Endothelial cell of umbilical vein (primary cell): ENCODE measurements at regions of chr1 and their contacts with region 1.

Region 1: DNA sequence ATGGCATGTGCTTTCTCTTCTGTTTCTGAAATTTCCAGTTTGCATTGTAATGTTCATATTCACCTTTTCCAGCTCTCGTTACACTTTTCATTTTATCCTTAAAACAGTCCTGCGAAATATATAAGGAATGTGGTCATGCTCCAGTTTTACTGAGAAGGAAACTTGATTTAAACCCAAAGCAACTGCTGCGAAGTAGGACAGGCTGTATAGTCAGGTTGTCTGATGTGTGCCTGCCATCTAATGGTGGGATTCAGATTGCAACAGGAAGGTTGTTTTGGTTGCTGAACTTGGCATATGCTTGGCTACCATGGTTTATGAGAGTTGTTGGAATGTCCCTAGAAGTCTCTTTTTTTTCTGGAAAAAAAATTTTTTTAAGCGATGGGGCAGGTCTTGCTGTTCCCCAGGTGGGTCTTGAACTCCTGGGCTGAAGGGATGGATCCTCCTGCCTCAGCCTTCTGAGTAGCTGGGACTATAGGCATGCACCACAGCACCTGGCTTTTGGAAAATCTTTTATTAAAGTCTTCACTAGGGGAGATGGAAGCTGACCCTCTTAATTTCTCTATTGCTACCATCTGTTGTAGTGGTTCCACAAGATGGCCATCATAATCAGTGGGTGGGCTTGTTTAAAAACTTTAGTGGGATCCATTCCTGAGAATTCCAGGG is 86.9 kb downstream of the UCK2 start:
- DNase-seq: peak; percentile 86
- H3K4me3 ChIP-seq: no peak overlapping the region
- H3K27ac ChIP-seq: no peak overlapping the region
- H3K4me1 ChIP-seq: peaks cover 18% of the 10 kb centered on the region
- H3K27me3 ChIP-seq: no peaks in the 10 kb centered on the region
- CTCF ChIP-seq: peak; percentile 81 to 82
- POLR2A ChIP-seq: no peak

Region 2: DNA sequence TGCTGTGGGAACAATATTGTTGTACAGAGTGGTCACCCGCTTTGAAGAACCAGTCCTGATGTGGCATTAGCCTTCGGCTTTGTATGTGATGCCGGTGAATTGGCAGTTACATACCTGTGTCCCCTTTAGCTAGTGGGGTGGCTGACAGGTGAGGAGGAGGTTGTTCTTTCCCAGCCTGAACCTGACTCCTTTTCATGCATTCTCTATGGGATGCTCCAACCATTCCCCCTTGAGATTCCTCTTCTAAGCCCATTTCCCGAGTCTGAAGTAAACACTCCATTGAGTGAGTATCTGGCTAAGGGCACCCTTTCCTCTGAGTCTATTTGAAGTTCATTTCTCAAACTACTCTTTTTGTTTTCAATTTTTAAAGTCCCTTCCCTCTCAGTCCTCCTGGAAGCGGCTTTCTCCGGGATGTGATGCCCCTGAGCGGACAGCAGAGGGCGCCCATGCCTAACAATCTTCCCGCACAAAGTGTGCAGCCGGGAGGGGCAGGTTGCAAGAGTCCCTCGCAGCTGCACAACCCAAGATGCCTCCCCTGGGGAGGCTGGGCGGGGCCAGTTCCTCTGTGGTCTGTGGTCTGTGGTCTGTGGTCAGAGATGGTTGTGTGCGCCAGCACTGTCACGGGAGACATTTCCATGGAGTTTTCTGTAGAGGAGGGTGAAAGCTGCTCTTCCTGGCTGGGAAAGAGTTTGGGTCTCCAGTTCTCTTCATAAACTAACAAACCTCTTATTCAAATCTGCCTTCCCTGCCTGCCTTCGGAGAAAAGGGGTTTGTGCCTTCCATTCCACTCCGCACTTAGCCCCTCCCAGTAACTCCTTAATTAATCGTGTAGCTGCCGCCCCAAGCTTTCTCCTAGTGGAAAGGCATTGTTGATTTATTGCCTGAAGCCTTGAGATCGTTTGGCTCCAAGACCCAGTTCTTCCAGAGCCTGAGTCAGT is 521.4 kb before region 1 on chr1:
- CTCF ChIA-PET with region 1: no interaction called
- POLR2A ChIA-PET with region 1: no interaction called
- dilution Hi-C with region 1: no loop called
- intact Hi-C with region 1: loop called (anchors 5 kb)
- DNase-seq: peak; percentile 67
- H3K4me3 ChIP-seq: no peak overlapping the region
- H3K27ac ChIP-seq: no peak overlapping the region
- H3K4me1 ChIP-seq: peaks cover 8% of the 10 kb centered on the region
- H3K27me3 ChIP-seq: peaks cover 19 to 32% of the 10 kb centered on the region in 2 experiments
- CTCF ChIP-seq: peak; percentile 90 to 92
- POLR2A ChIP-seq: no peak

Region 3: GRCh38 chr1:165717918-165718515 is 196.2 kb before region 1 on chr1:
- CTCF ChIA-PET with region 1: interaction called, 6 read pairs
- POLR2A ChIA-PET with region 1: no interaction called
- dilution Hi-C with region 1: no loop called
- intact Hi-C with region 1: loop called (anchors 1 kb)
- DNase-seq: peak; percentile 68
- H3K4me3 ChIP-seq: no peak overlapping the region
- H3K27ac ChIP-seq: no peak overlapping the region
- H3K4me1 ChIP-seq: no peaks in the 10 kb centered on the region
- H3K27me3 ChIP-seq: no peaks in the 10 kb centered on the region
- CTCF ChIP-seq: peak; percentile 52 to 70
- POLR2A ChIP-seq: no peak

Region 4: GRCh38 chr1:165827268-165828102 is 86.8 kb before region 1 on chr1 and contains the start of gene UCK2:
- CTCF ChIA-PET with region 1: interaction called, 8 read pairs
- POLR2A ChIA-PET with region 1: interaction called, 4 read pairs
- dilution Hi-C with region 1: no loop called
- intact Hi-C with region 1: loop called (anchors 1 kb)
- DNase-seq: peak; percentile 81
- H3K4me3 ChIP-seq: peak within 1 kb of the TSS; percentile 77 to 93 (median 86)
- H3K27ac ChIP-seq: peak within 1 kb of the TSS; percentile 95
- H3K4me1 ChIP-seq: peaks cover 13% of the 10 kb centered on the region
- H3K27me3 ChIP-seq: no peaks in the 10 kb centered on the region
- CTCF ChIP-seq: peak in 1 of 2 donors; percentile 29
- POLR2A ChIP-seq: peak; percentile 49
- total RNA-seq, gene UCK2: 62.3 and 68.4 TPM in 2 replicates

Region 5: GRCh38 chr1:165884690-165885304 is 29.5 kb before region 1 on chr1:
- CTCF ChIA-PET with region 1: interaction called, 6 read pairs
- POLR2A ChIA-PET with region 1: no interaction called
- dilution Hi-C with region 1: no loop called
- intact Hi-C with region 1: loop called (anchors 1 kb)
- DNase-seq: peak; percentile 70
- H3K4me3 ChIP-seq: no peak overlapping the region
- H3K27ac ChIP-seq: peak overlapping the region; percentile 83
- H3K4me1 ChIP-seq: peaks cover 26% of the 10 kb centered on the region
- H3K27me3 ChIP-seq: no peaks in the 10 kb centered on the region
- CTCF ChIP-seq: no peak
- POLR2A ChIP-seq: no peak

Region 6: DNA sequence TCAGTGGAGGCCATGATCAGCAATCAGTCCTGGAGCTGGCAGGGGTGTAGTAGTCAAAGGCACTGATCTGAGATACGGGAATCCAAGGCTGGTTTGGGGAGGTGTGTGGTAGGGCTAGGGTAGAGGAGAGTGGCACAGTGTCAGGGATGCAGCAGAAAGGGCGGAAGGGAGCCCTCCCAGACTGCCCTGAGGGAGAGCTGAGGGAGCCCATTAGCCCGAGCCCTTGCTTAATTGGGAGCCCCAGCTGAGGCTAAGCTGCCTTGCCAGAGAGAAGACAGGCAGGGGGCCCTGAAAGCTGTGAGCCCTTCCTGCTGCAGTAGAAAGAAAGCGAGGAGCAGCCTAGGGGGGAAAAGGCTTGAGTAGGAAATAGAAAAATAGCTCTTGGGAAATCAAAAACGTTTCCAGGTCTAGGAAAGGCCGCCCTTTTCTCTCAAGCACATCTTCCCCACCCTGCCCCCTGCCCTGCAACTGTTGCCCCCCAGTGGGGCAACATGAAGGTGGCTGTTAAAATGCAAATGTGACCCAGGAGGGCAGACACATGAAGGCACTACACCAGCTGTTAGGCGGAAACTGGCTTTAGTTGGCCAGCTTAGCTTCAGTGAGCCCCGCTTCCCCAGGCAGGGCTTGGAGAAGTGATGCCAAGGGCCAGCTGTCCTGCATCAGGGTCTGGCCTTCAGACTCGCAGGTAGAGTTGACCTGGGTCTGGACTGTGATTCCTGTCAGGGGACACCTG is 19.3 kb after region 1 on chr1:
- CTCF ChIA-PET with region 1: no interaction called
- POLR2A ChIA-PET with region 1: no interaction called
- dilution Hi-C with region 1: no loop called
- intact Hi-C with region 1: no loop called
- DNase-seq: no peak
- H3K4me3 ChIP-seq: no peak overlapping the region
- H3K27ac ChIP-seq: no peak overlapping the region
- H3K4me1 ChIP-seq: no peaks in the 10 kb centered on the region
- H3K27me3 ChIP-seq: no peaks in the 10 kb centered on the region
- CTCF ChIP-seq: no peak
- POLR2A ChIP-seq: no peak